WTC11 (cell line): ENCODE measurements at regions of chr19 and their contacts with region 1.

Region 1: DNA sequence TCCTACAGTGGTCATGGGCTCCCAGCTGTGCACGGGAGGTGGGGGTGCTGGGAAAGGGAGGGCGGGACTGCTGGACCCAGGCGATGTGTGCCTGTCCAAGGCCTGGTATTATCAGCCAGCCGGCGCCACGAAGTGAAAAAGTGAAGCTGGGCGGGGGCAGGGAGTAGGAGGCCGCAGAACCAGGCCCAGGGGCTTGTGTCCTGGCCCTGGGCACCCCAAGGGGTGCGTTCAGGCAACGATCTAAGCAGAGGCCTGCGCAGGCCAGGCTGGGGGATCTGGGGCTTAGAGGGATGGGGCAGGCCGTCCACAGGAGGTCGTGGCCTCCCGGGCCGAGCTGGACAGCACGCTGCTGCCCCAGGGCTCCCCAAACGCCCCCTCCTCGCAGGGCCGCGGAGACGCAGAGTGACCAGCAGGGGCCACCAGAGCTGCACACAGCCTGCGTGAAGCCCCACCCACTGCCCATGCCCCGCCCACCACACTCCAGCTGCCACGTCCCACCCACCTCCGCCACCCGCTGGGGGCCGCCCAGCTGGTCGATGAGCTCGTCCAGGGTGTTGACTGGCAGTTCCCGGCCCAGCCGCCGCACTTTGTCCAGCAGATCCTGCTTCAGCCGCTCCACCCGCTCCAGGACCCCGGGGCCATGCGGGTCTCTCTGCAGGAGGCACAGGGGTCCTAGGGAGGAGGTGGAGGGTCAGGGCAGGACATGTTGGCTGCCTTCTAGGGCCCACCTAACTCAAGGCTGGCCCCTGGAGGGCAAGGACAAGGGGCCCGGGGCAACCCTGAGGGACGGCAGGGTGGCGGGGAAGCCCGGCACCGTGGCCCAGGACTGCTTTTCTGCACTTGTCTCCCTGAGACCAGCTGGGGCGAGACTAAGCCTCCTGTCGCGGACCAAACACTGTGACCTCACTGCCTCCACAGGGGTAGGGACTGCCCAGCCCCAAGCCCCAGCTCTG is 9.5 kb downstream of the GPX4 start:
- DNase-seq: peak; percentile 98
- ATAC-seq: peak; percentile 81
- H3K4me3 Mint-ChIP-seq: no peak overlapping the region
- H3K27ac Mint-ChIP-seq: no peak overlapping the region; the same call in 1 of the 2 replicates
- H3K4me1 Mint-ChIP-seq: peaks cover 2% of the 10 kb centered on the region; the same call in 1 of the 2 replicates
- H3K27me3 Mint-ChIP-seq: no peaks in the 10 kb centered on the region
- CTCF ChIP-seq: peak; percentile 74

Region 2: GRCh38 chr19:1039646-1040475 is 73.4 kb before region 1 on chr19 and contains the start of gene ABCA7:
- CTCF ChIA-PET with region 1: interaction called, 11 read pairs
- POLR2A ChIA-PET with region 1: interaction called, 4 read pairs
- DNase-seq: peak; percentile 100
- ATAC-seq: peak; percentile 84
- H3K4me3 Mint-ChIP-seq: peak within 1 kb of the TSS; percentile 84
- H3K27ac Mint-ChIP-seq: peak within 1 kb of the TSS; percentile 90
- H3K4me1 Mint-ChIP-seq: peaks cover 12% of the 10 kb centered on the region
- H3K27me3 Mint-ChIP-seq: no peaks in the 10 kb centered on the region
- CTCF ChIP-seq: no peak
- total RNA-seq, gene ABCA7: 40.3 to 45.0 TPM (median 41.3 TPM) in 3 replicates

Region 3: GRCh38 chr19:1082172-1082927 is 31.0 kb before region 1 on chr19:
- CTCF ChIA-PET with region 1: interaction called, 29 read pairs
- POLR2A ChIA-PET with region 1: no interaction called
- DNase-seq: peak; percentile 99
- ATAC-seq: peak; percentile 83
- H3K4me3 Mint-ChIP-seq: peak overlapping the region; percentile 67
- H3K27ac Mint-ChIP-seq: peak overlapping the region; percentile 90
- H3K4me1 Mint-ChIP-seq: no peaks in the 10 kb centered on the region; the same call in 1 of the 2 replicates
- H3K27me3 Mint-ChIP-seq: no peaks in the 10 kb centered on the region
- CTCF ChIP-seq: no peak

Region 4: GRCh38 chr19:1146858-1147780 is 33.8 kb after region 1 on chr19:
- CTCF ChIA-PET with region 1: interaction called, 11 read pairs
- POLR2A ChIA-PET with region 1: no interaction called
- DNase-seq: peak; percentile 19
- ATAC-seq: no peak
- H3K4me3 Mint-ChIP-seq: no peak overlapping the region
- H3K27ac Mint-ChIP-seq: peak overlapping the region; percentile 63; the same call in 1 of the 2 replicates
- H3K4me1 Mint-ChIP-seq: peaks cover 10% of the 10 kb centered on the region
- H3K27me3 Mint-ChIP-seq: no peaks in the 10 kb centered on the region
- CTCF ChIP-seq: no peak

Region 5: GRCh38 chr19:1161716-1162115 is 48.4 kb after region 1 on chr19:
- CTCF ChIA-PET with region 1: interaction called, 14 read pairs
- POLR2A ChIA-PET with region 1: no interaction called
- DNase-seq: no peak
- ATAC-seq: peak; percentile 17
- H3K4me3 Mint-ChIP-seq: no peak overlapping the region
- H3K27ac Mint-ChIP-seq: peak overlapping the region; percentile 93
- H3K4me1 Mint-ChIP-seq: peaks cover 8% of the 10 kb centered on the region
- H3K27me3 Mint-ChIP-seq: no peaks in the 10 kb centered on the region
- CTCF ChIP-seq: no peak

Region 6: GRCh38 chr19:1189419-1189818 is 76.1 kb after region 1 on chr19:
- CTCF ChIA-PET with region 1: interaction called, 69 read pairs
- POLR2A ChIA-PET with region 1: no interaction called
- DNase-seq: no peak
- ATAC-seq: no peak
- H3K4me3 Mint-ChIP-seq: no peak overlapping the region
- H3K27ac Mint-ChIP-seq: 0 out of 2 replicates have a peak overlapping the region, but pooled peaks have one; percentile 23
- H3K4me1 Mint-ChIP-seq: peaks cover 4% of the 10 kb centered on the region; the same call in 1 of the 2 replicates
- H3K27me3 Mint-ChIP-seq: no peaks in the 10 kb centered on the region; the same call in 1 of the 2 replicates
- CTCF ChIP-seq: no peak

Region 7: DNA sequence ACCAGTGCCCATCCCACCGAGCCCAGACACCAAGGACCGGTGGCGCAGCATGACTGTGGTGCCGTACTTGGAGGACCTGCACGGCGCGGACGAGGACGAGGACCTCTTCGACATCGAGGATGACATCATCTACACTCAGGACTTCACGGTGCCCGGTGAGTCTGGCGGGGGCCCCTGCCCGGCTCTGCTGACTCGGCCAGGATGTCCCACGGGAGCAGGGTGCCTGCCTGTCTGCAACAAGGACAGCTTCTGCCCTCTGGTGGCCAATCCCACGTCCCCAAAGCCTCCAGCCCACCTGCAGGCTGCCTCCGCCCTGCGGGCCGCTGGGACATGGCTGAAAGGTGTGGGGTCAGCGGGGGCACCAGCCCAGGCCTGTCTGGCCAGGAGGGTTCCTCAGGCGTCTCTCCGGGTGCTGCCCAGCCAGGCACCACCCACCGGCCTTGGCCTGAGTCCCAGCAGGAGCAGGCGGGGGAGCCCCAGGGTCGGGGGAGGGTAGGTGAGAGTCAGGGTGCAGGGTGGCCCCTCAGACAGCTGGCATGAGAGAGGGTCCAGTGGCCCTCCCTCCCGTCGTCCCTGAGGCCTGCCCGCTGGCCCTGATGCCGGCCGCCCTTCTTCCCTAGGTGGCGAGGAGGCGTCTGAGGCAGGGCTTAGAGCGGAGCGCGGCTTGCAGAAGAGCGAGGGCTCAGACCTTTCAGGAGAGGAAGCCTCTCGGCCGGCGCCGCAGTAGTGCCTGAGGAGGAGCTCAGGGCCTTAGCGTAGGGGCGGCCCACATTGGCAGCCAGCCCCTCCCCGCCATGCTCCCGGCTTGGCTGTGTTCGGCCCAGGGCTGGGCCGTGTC is 109.9 kb after region 1 on chr19:
- CTCF ChIA-PET with region 1: interaction called, 46 read pairs
- POLR2A ChIA-PET with region 1: no interaction called
- DNase-seq: peak; percentile 78
- ATAC-seq: peak; percentile 51
- H3K4me3 Mint-ChIP-seq: no peak overlapping the region
- H3K27ac Mint-ChIP-seq: peak overlapping the region; percentile 32; the same call in 1 of the 2 replicates
- H3K4me1 Mint-ChIP-seq: peaks cover under 1% of the 10 kb centered on the region
- H3K27me3 Mint-ChIP-seq: no peaks in the 10 kb centered on the region
- CTCF ChIP-seq: no peak; the same call in 1 of the 2 replicates